Activated T-helper 1 cell treated with anti-CD3 and anti-CD28 coated beads, Interleukin-12 subunit alpha, Interleukin-12 subunit beta, Interleukin-2, Interleukin-4 antibody, amounts not matched to agents 30 ng/mL and 10 ng/mL and 1 ng/mL, durations not matched to agents 14 hours and 24 hours and 36 hours (primary cell): ENCODE measurements at regions of chr1 and their contacts with region 1.

Region 1: DNA sequence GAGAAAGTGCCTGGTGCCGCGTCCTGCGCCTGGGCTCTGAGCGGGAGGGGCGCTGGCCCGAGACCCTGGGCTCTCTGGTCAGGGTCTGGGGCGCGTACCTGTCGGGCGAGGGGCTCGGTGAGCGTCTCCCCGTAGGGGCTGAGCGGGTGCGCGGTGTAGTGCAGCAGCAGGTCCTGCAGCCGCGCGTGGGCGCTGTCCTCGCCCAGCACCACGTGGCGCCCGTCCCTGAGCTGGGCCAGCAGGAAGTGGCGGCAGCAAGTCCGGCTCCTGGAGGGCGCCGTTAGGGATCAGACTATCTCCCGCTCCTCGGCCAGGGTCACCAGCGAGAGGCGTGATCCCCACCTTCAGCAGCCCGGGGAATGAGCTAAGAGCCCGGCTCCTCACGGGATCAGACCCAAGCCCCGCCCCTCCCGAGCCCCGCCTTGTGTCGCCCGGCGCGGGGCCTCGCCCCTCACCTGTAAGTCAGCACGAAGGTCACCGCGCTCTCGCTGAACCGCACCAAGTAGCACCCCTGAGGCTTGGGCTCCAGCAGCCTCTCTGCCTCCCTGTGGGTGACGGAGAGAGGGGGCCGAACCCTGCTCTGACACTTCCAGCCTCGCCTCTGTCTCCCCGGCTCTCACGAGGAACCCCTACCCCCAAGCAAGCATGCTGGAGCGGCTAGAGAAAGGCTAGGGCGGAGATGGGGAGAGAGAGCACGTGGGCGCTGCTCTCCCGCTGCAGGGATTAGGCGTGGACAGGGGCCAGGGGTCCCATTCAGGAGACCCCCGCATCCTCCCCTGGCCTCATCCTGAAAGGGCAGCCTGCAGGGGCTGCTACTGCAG is 2.7 kb downstream of the SH2D2A start:
- DNase-seq: peak; percentile 68
- H3K4me3 Mint-ChIP-seq: peak overlapping the region; percentile 85
- H3K27ac Mint-ChIP-seq: peak overlapping the region; percentile 100
- H3K4me1 Mint-ChIP-seq: peaks cover 75% of the 10 kb centered on the region
- H3K27me3 Mint-ChIP-seq: no peaks in the 10 kb centered on the region

Region 2: GRCh38 chr1:155540000-155540874 is 1273.7 kb before region 1 on chr1:
- intact Hi-C with region 1: no loop called
- DNase-seq: no peak
- H3K4me3 Mint-ChIP-seq: peak overlapping the region; percentile 49
- H3K27ac Mint-ChIP-seq: peak overlapping the region; percentile 93
- H3K4me1 Mint-ChIP-seq: peaks cover 54% of the 10 kb centered on the region
- H3K27me3 Mint-ChIP-seq: no peaks in the 10 kb centered on the region

Region 3: DNA sequence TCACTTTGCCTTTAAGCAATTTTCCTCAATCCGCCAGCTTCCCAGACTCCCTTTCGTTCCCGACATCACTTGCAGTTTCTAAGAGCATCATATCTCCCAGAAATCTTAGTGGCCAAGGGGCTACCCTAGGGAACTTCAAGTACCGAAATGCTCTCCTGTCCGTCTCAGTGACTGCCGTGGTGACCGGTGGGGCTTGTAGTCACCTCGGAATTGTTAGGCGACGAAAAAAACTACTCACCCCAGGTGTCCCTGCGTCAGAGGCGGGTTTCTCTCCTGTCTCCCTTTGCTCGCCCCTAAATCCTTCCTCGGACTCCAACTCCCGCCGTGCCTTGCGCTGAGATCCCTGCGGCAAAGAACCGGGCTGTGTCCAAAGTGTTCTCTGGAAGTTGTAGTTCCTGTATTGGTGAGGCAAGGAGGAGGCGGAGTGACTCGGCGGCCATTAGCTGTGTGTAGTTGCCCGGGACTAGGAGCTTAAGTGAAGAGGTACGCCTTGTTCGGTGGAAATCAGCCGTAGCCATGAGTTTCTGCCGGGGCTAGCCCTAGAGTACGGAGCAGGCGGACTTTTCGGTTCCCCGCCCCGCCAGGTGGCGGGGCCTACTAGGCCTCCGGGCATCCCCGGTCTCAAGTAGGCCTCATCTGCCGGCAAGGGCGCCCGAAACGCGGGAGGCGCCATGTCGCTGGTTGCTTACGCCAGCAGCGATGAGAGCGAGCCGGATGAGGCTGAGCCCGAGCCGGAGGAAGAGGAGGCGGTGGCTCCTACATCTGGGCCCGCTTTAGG is 46.7 kb before region 1 on chr1 and contains the start of gene PRCC:
- intact Hi-C with region 1: loop called (anchors 1 kb)
- DNase-seq: peak; percentile 97
- H3K4me3 Mint-ChIP-seq: no peak within 1 kb of the TSS
- H3K27ac Mint-ChIP-seq: no peak within 1 kb of the TSS
- H3K4me1 Mint-ChIP-seq: peaks cover 46% of the 10 kb centered on the region
- H3K27me3 Mint-ChIP-seq: no peaks in the 10 kb centered on the region
- total RNA-seq, gene PRCC: 117 TPM in 2 replicates

Region 4: GRCh38 chr1:156833603-156834002 is 19.6 kb after region 1 on chr1:
- intact Hi-C with region 1: loop called (anchors 1 kb)
- DNase-seq: no peak
- H3K4me3 Mint-ChIP-seq: peak overlapping the region; percentile 43
- H3K27ac Mint-ChIP-seq: peak overlapping the region; percentile 88
- H3K4me1 Mint-ChIP-seq: peaks cover 60% of the 10 kb centered on the region
- H3K27me3 Mint-ChIP-seq: no peaks in the 10 kb centered on the region

Region 5: DNA sequence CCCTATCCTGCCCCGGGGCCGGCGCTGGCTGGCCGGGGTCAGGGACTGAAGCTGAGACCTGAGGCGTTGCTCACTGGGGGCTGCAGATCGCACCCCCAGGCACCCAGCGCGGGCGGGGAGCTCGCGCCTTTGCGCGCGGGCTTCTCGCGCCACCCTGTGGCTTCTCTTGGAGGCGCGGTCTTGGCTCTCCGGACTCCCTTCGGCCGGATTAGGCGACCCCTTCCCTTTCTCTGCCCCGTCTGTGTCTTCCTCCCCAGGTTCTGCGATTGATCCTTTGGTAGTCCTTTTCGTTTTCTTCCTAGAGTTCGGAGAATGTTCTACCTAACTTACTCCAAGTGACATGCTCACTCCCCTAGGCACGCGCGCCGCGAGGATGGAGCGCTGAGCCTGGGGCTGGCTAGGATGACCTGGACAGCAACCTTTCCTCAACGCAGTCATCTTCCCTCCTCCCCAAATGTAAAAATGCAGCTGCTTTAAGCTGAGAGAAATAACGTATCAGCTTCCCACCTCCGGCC is 46.2 kb after region 1 on chr1:
- intact Hi-C with region 1: loop called (anchors 1 kb)
- DNase-seq: peak; percentile 53
- H3K4me3 Mint-ChIP-seq: peak overlapping the region; percentile 88
- H3K27ac Mint-ChIP-seq: peak overlapping the region; percentile 80
- H3K4me1 Mint-ChIP-seq: peaks cover 56% of the 10 kb centered on the region
- H3K27me3 Mint-ChIP-seq: peaks cover 15% of the 10 kb centered on the region

Region 6: GRCh38 chr1:156920233-156921052 is 106.5 kb after region 1 on chr1 and contains the start of gene LRRC71:
- intact Hi-C with region 1: loop called (anchors 5 kb)
- DNase-seq: peak; percentile 64
- H3K4me3 Mint-ChIP-seq: no peak within 1 kb of the TSS
- H3K27ac Mint-ChIP-seq: no peak within 1 kb of the TSS
- H3K4me1 Mint-ChIP-seq: peaks cover 4% of the 10 kb centered on the region
- H3K27me3 Mint-ChIP-seq: peaks cover 66% of the 10 kb centered on the region
- total RNA-seq, gene LRRC71: not detected in 2 replicates

Region 7: GRCh38 chr1:157878059-157878458 is 1064.1 kb after region 1 on chr1:
- intact Hi-C with region 1: no loop called
- DNase-seq: no peak
- H3K4me3 Mint-ChIP-seq: no peak overlapping the region
- H3K27ac Mint-ChIP-seq: no peak overlapping the region
- H3K4me1 Mint-ChIP-seq: no peaks in the 10 kb centered on the region
- H3K27me3 Mint-ChIP-seq: peaks cover 6% of the 10 kb centered on the region